CD8-positive, alpha-beta T cell (primary cell): ENCODE measurements at regions of chr1 and their contacts with region 1.

Region 1: GRCh38 chr1:224454397-224455066 is 19.9 kb upstream of the WDR26 start:
- DNase-seq: no peak
- ATAC-seq: no peak
- H3K4me3 ChIP-seq: no peak overlapping the region
- H3K4me3 Mint-ChIP-seq: no peak overlapping the region
- H3K27ac ChIP-seq: no peak overlapping the region
- H3K27ac Mint-ChIP-seq: no peak overlapping the region
- H3K4me1 ChIP-seq: peaks cover 7% of the 10 kb centered on the region
- H3K4me1 Mint-ChIP-seq: peaks cover 16% of the 10 kb centered on the region
- H3K27me3 ChIP-seq: no peaks in the 10 kb centered on the region
- H3K27me3 Mint-ChIP-seq: no peaks in the 10 kb centered on the region
- CTCF ChIP-seq: no peak

Region 2: DNA sequence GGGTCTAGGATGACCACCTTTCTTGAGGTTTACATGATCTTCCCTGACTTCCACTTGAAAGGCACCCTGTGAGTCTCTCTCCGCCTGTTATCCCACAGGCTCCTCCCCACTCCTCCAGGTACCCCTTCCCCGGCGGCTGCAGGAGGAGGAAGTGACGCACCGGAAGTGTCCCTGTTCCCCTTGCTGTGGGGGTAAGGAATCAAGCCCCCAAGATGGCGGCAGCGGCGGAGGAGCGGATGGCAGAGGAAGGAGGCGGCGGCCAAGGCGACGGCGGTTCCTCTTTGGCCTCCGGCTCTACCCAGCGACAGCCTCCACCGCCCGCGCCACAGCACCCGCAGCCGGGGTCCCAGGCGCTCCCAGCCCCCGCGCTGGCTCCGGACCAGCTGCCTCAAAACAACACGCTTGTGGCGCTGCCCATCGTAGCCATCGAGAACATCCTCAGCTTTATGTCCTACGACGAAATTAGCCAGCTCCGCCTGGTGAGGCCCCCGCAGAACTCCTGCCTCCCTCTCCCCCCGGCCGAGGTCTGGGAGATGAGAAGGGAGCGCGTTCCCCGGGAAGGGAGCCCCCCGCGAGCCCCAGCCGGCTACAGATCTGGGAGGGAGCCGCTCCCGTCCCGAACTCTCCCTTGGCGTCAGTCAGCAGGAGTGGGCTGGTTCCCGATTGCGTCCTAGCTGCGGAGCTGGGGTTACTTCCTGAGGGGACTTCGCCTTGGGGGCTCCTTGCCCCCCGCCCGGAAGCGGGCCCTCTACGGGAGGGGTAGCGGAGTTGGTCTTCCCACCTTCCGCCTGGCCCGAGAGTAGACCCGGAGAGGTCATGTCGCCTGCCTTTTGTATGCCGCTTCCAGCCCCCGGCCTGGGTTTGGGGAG is 340.4 kb before region 1 on chr1 and contains the start of gene FBXO28:
- CTCF ChIA-PET with region 1: interaction called, 44 read pairs
- POLR2A ChIA-PET with region 1: no interaction called
- intact Hi-C with region 1: loop called (anchors 1 to 2 kb)
- DNase-seq: peak; percentile 86 to 96 (median 94)
- ATAC-seq: peak; percentile 92
- H3K4me3 ChIP-seq: peak within 1 kb of the TSS; percentile 78 to 82
- H3K4me3 Mint-ChIP-seq: peak within 1 kb of the TSS; percentile 92
- H3K27ac ChIP-seq: peak within 1 kb of the TSS; percentile 94 to 97
- H3K27ac Mint-ChIP-seq: peak within 1 kb of the TSS; percentile 95
- H3K4me1 ChIP-seq: peaks cover 22% of the 10 kb centered on the region
- H3K4me1 Mint-ChIP-seq: peaks cover 34% of the 10 kb centered on the region
- H3K27me3 ChIP-seq: no peaks in the 10 kb centered on the region
- H3K27me3 Mint-ChIP-seq: peaks cover 12% of the 10 kb centered on the region
- CTCF ChIP-seq: no peak
- total RNA-seq, gene FBXO28: 43.4 to 44.2 TPM

Region 3: DNA sequence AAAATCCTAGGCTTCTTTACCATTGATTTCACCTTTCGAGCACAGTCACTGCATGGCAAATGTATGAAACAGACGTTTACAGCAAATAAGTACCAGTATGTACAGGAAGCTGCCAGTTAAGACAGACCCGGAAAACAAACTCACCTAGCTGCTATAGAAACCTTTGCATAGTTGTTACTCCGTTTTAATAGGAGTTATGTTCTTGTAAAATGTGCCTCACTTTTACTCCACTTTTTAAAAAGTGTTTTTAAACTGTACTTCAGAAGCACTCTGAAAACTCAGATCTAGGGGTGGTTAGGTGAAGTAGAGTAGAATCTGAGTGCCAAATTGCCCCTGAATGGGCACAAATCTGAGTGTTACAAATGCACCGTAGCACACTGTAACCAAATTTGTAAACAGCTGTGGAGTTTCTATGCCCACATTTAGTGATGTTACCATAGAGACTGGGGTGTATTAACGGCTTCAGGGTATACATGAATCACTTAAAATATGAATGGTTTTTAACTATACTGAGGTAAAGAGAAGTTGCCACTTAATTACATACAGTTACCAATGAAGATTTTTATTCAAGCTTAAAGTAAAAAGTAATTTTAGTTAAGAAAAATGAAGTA is 67.1 kb before region 1 on chr1:
- CTCF ChIA-PET with region 1: interaction called, 11 read pairs
- POLR2A ChIA-PET with region 1: no interaction called
- intact Hi-C with region 1: no loop called
- DNase-seq: peak in 2 of 9 experiments; percentile 40 to 62
- ATAC-seq: peak; percentile 75
- H3K4me3 ChIP-seq: no peak overlapping the region
- H3K4me3 Mint-ChIP-seq: peak overlapping the region; percentile 20
- H3K27ac ChIP-seq: peak overlapping the region; percentile 55 to 60
- H3K27ac Mint-ChIP-seq: peak overlapping the region; percentile 81
- H3K4me1 ChIP-seq: peaks cover 37% of the 10 kb centered on the region
- H3K4me1 Mint-ChIP-seq: peaks cover 50% of the 10 kb centered on the region
- H3K27me3 ChIP-seq: no peaks in the 10 kb centered on the region
- H3K27me3 Mint-ChIP-seq: no peaks in the 10 kb centered on the region
- CTCF ChIP-seq: no peak

Region 4: DNA sequence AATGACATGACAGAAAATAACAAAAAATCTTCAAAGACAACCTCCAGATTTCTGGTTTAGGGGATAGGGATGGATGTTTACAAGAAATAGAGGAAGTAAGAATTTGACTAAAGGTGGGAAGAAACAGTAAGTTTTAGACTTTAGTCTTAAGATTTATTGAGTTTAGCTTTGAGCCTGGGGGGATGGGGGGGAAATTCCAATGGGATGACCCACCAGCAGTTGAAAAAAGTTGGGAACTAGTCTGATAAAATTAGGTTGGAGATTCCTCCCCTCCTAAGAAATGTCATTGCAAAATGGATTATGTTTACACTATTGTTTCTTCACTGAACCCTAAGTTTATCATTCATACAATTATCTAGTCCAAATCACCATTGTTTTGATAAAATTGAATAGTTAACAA is 48.3 kb before region 1 on chr1:
- CTCF ChIA-PET with region 1: interaction called, 12 read pairs
- POLR2A ChIA-PET with region 1: no interaction called
- intact Hi-C with region 1: loop called in 1 of 2 experiments (anchors 10 kb)
- DNase-seq: no peak
- ATAC-seq: no peak
- H3K4me3 ChIP-seq: no peak overlapping the region
- H3K4me3 Mint-ChIP-seq: no peak overlapping the region
- H3K27ac ChIP-seq: no peak overlapping the region
- H3K27ac Mint-ChIP-seq: no peak overlapping the region
- H3K4me1 ChIP-seq: no peaks in the 10 kb centered on the region
- H3K4me1 Mint-ChIP-seq: peaks cover 34% of the 10 kb centered on the region
- H3K27me3 ChIP-seq: no peaks in the 10 kb centered on the region
- H3K27me3 Mint-ChIP-seq: no peaks in the 10 kb centered on the region
- CTCF ChIP-seq: no peak

Region 5: GRCh38 chr1:224411766-224412165 is 42.8 kb before region 1 on chr1:
- CTCF ChIA-PET with region 1: interaction called, 6 read pairs
- POLR2A ChIA-PET with region 1: no interaction called
- intact Hi-C with region 1: loop called (anchors 5 to 10 kb)
- DNase-seq: no peak
- ATAC-seq: no peak
- H3K4me3 ChIP-seq: no peak overlapping the region
- H3K4me3 Mint-ChIP-seq: no peak overlapping the region
- H3K27ac ChIP-seq: no peak overlapping the region
- H3K27ac Mint-ChIP-seq: peak overlapping the region; percentile 21
- H3K4me1 ChIP-seq: no peaks in the 10 kb centered on the region
- H3K4me1 Mint-ChIP-seq: peaks cover 28% of the 10 kb centered on the region
- H3K27me3 ChIP-seq: no peaks in the 10 kb centered on the region
- H3K27me3 Mint-ChIP-seq: no peaks in the 10 kb centered on the region
- CTCF ChIP-seq: no peak

Region 6: DNA sequence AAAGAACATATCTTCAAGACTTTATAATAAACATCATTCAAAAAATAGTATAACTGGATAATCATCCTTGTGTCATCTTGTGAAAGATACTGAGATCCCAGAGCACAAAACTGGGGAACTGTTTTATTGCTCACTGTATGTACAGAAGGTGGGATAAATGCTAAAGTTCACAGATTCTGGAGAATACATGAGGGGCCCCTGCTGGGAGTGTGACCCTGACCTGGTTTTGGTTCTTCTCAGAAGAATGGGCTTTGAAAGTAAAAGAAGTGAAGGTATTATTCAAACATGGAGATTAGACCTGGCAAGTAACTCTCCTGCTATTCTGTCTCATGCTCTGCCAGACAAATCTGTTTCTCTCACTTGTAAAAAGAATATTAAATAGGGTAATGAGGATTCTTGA is 34.4 kb before region 1 on chr1:
- CTCF ChIA-PET with region 1: interaction called, 7 read pairs
- POLR2A ChIA-PET with region 1: no interaction called
- intact Hi-C with region 1: loop called (anchors 5 kb)
- DNase-seq: no peak
- ATAC-seq: no peak
- H3K4me3 ChIP-seq: no peak overlapping the region
- H3K4me3 Mint-ChIP-seq: no peak overlapping the region
- H3K27ac ChIP-seq: no peak overlapping the region
- H3K27ac Mint-ChIP-seq: no peak overlapping the region
- H3K4me1 ChIP-seq: peaks cover 2% of the 10 kb centered on the region
- H3K4me1 Mint-ChIP-seq: peaks cover 35% of the 10 kb centered on the region
- H3K27me3 ChIP-seq: no peaks in the 10 kb centered on the region
- H3K27me3 Mint-ChIP-seq: no peaks in the 10 kb centered on the region
- CTCF ChIP-seq: no peak